Activated naive CD4-positive, alpha-beta T cell treated with anti-CD3 and anti-CD28 coated beads for 36 hours (primary cell): ENCODE measurements at regions of chr10 and their contacts with region 1.

Region 1: GRCh38 chr10:70578371-70578947 is 24.1 kb downstream of the PRF1 start:
- DNase-seq: peak; percentile 88
- H3K4me3 Mint-ChIP-seq: no peak overlapping the region
- H3K27ac Mint-ChIP-seq: peak overlapping the region; percentile 57
- H3K4me1 Mint-ChIP-seq: peaks cover 37% of the 10 kb centered on the region
- H3K27me3 Mint-ChIP-seq: no peaks in the 10 kb centered on the region

Region 2: DNA sequence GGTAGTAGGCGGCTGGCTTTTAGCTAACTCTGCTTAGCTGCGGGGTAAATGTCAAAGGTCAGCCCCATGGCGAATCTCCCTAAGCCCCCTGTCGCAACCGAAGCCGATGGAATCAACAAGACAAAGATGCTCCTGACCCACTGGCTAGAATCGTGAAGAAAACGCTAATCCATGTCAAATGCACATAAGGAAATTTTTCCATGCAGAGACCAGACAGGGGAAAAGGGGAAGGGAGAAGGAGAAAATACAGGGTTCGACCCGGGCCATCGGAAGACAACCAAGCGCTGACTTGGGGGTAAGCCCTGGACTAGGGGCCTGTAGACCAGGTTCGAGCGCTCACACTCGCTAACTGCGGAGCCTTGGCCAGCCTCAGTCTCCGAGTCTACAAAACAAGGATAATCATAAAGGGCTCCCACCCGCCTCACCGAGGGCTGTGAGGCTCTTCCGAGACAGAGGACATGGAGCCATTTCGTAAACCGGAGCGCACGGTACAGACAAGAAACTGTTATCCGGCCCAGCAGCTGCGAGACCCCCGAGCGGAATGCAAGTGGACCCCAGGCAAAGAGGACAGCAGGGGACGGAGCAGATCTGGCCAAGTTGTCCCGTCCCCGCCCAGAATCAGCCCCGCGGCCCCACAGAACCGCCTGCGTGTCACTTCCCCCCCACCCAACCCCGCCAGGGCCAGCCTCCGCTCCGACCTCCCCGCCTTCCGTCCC is 408.7 kb before region 1 on chr10:
- CTCF ChIA-PET with region 1: no interaction called
- intact Hi-C with region 1: loop called (anchors 2 kb)
- DNase-seq: no peak
- H3K4me3 Mint-ChIP-seq: peak overlapping the region; percentile 87
- H3K27ac Mint-ChIP-seq: peak overlapping the region; percentile 90
- H3K4me1 Mint-ChIP-seq: peaks cover 66% of the 10 kb centered on the region
- H3K27me3 Mint-ChIP-seq: no peaks in the 10 kb centered on the region

Region 3: GRCh38 chr10:70426823-70427222 is 151.6 kb before region 1 on chr10:
- CTCF ChIA-PET with region 1: no interaction called
- intact Hi-C with region 1: no loop called
- DNase-seq: no peak
- H3K4me3 Mint-ChIP-seq: no peak overlapping the region
- H3K27ac Mint-ChIP-seq: no peak overlapping the region
- H3K4me1 Mint-ChIP-seq: peaks cover 3% of the 10 kb centered on the region
- H3K27me3 Mint-ChIP-seq: no peaks in the 10 kb centered on the region

Region 4: DNA sequence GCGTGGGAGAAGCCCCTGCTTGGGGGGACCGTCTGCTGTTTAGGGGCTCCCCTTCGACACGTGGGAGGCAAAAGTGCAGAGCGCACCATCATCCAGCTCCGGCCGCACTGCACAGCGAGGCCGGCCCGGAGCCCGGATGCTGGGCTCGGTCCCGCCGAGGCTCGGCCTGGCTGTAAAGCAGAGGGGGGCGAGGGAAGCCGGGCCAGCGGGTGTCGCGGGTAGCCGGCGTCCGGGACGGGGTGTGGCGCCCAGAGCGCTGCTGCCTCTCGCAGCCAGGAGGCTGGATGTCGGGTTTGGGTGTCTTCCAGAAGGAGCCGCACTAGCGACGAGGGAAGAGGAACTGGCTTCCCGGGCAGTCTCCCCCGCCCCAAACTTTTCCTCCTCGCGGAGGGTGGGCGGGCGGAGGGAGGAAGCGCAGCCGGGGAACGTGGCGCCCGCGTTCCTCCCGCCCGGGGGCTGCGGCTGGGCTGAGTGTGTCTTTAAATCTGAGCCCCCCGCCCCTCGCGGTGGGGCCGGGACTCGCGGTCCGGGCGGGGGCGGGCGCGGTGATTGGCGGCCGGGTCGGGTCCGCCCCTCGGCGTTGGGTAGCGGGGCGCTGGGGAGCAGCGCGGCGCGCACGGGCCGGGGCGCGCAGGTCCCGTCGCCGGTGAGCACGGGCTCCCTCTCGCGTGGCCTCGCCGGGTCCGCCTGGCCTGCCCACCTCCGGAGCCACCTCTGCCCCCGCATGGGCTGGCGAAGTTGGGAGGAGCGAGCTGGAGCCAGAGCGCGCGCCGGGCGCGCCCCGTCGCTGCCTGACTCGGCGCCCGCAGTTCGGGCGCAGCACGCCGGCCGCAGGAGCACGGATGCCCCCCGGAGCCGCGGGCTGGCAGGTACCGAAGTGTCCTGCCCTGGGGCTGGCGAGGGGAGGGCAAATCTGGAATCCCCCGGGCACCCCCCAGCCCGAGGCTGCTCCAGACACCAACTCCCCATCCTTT is 100.0 kb before region 1 on chr10 and contains the start of gene PALD1:
- CTCF ChIA-PET with region 1: no interaction called
- intact Hi-C with region 1: loop called (anchors 2 kb)
- DNase-seq: peak; percentile 42
- H3K4me3 Mint-ChIP-seq: peak within 1 kb of the TSS; percentile 74
- H3K27ac Mint-ChIP-seq: peak within 1 kb of the TSS; percentile 41
- H3K4me1 Mint-ChIP-seq: peaks cover 43% of the 10 kb centered on the region
- H3K27me3 Mint-ChIP-seq: peaks cover 29% of the 10 kb centered on the region
- total RNA-seq, gene PALD1: 0.69 TPM

Region 5: DNA sequence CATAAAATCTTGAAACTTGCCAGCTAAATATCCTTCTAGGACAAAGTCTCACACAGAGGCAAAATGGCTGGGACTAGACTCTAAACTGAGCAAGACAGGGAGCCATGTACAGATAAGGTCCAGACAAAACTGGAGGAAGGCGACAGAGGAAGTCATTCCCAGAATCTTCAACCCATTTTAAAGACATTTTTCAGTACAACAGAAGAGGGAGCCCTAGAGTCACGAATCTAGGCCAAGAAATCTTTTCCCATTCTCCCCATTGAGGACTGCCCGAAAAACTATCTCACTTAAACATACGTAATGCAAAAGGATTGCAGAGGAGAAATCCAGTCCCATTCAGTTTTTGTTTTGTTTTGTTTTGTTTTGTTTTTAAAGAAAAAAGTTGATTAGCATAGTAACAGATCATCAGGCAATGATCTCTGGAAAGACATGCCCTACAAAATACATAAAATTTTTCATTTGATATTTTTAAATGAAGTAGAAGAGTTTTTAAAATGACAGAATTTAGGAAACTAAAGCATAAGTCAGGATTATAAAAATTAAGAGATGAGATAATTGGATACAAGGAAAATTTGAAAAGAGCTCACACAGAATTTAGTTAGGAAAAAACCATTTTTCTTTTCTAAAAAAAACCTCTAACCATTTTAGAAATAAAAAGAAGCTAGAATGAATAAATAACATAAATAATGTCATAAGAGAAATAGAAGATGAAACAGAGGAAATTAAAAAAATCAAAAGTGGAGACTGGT is 41.0 kb after region 1 on chr10:
- CTCF ChIA-PET with region 1: no interaction called
- intact Hi-C with region 1: loop called (anchors 1 kb)
- DNase-seq: no peak
- H3K4me3 Mint-ChIP-seq: no peak overlapping the region
- H3K27ac Mint-ChIP-seq: no peak overlapping the region
- H3K4me1 Mint-ChIP-seq: peaks cover 4% of the 10 kb centered on the region
- H3K27me3 Mint-ChIP-seq: peaks cover 3% of the 10 kb centered on the region

Region 6: DNA sequence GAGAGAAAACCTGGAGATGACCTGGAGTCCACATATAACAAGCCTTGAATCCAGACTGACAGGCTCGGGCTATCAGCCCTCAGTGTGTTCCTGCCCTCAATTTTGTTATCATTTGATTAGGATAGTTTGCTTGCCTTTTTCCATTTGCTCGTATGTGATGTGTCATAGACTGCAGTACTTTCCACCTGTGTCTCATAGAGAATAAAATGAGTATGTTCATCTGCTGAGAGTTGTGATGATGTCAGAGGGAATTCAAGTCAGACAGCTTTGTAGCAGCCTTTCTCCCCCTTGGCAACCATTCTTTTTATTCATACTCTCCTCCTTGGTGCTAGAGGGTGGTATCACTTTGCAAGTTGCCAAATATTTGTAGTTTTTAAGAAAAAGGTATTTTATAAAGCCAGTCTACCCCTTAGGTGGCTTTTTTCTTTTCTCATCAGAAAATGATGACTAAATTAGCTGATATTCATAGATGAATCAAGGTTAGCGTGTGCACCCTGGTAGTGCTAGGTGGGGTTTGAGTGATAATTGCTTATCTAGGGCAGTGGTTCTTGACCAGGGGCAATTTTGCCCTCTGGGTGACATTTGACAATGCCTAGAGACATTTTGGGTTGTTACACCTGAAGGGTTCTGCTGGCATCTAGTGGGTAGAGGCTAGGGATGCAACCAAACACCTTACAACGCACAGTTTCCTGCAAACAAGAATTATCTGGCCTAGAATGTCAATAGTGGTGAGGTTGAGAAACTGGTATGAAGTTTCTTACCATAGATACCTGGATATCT is 242.7 kb after region 1 on chr10:
- CTCF ChIA-PET with region 1: interaction called, 4 read pairs
- intact Hi-C with region 1: loop called (anchors 1 kb)
- DNase-seq: peak; percentile 41
- H3K4me3 Mint-ChIP-seq: no peak overlapping the region
- H3K27ac Mint-ChIP-seq: peak overlapping the region; percentile 61
- H3K4me1 Mint-ChIP-seq: peaks cover 51% of the 10 kb centered on the region
- H3K27me3 Mint-ChIP-seq: no peaks in the 10 kb centered on the region